ENCODE measurements at regions of chr9 and their contacts with region 1.

Region 1: DNA sequence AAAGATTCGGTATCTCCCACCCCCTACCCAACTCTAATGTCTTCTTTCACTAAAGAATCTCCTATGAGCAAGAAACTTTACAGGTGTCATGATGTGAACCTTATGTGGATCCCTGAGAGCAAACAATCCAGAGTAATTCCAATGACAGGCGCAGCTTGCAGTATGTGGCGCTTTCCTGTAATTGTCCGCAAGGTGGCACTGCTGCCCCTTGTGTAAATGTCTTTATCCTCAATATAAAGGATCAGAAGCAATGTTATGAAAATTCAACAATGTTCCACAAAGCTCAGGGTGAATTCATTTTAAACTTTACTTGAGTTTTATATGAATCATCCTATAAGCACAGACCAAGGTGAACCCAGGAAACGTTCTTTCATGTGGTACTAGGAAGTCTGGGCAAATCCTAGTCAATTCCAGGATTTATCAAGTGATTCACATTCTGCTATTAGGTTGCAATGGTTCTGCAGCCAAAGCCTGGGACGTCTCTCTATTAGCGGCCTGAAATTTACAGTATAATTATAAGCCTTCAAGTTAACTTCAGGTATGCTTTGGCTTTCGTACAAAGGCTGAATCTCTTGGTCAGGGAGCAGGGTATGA is 113.7 kb downstream of the TRPM6 start:
- DNase-seq: peak; percentile 23
- ATAC-seq: peak; percentile 72
- H3K4me3 ChIP-seq: no peak overlapping the region
- H3K27ac ChIP-seq: no peak overlapping the region
- H3K4me1 ChIP-seq: peaks cover 5% of the 10 kb centered on the region
- H3K27me3 ChIP-seq: no peaks in the 10 kb centered on the region; a peak in 1 of 4 replicates
- CTCF ChIP-seq: peak; percentile 81 to 89 (median 87); a peak in 5 of 6 replicates
- EP300 ChIP-seq: no peak
- POLR2A ChIP-seq: no peak
- RAD21 ChIP-seq: peak; percentile 82

Region 2: GRCh38 chr9:74952281-74953151 is 178.5 kb after region 1 on chr9 and contains the start of gene C9orf40:
- CTCF ChIA-PET with region 1: interaction called, 16 read pairs
- POLR2A ChIA-PET with region 1: no interaction called
- RAD21 ChIA-PET with region 1: interaction called, 3 read pairs
- SMC1A ChIA-PET with region 1: interaction called, 5 read pairs
- in situ Hi-C with region 1: no loop called
- intact Hi-C with region 1: loop called (anchors 2 kb)
- DNase-seq: peak; percentile 38
- ATAC-seq: peak; percentile 95
- H3K4me3 ChIP-seq: peak within 1 kb of the TSS; percentile 95
- H3K27ac ChIP-seq: peak within 1 kb of the TSS; percentile 91
- H3K4me1 ChIP-seq: peaks cover 3% of the 10 kb centered on the region; the same call in 1 of the 2 replicates
- H3K27me3 ChIP-seq: no peaks in the 10 kb centered on the region
- CTCF ChIP-seq: peak; percentile 72 to 89 (median 88)
- EP300 ChIP-seq: no peak
- POLR2A ChIP-seq: peak; percentile 87
- RAD21 ChIP-seq: peak; percentile 37; the same call in 1 of the 2 replicates
- polyA plus RNA-seq, gene C9orf40: 7.8 to 14.1 TPM

Region 3: DNA sequence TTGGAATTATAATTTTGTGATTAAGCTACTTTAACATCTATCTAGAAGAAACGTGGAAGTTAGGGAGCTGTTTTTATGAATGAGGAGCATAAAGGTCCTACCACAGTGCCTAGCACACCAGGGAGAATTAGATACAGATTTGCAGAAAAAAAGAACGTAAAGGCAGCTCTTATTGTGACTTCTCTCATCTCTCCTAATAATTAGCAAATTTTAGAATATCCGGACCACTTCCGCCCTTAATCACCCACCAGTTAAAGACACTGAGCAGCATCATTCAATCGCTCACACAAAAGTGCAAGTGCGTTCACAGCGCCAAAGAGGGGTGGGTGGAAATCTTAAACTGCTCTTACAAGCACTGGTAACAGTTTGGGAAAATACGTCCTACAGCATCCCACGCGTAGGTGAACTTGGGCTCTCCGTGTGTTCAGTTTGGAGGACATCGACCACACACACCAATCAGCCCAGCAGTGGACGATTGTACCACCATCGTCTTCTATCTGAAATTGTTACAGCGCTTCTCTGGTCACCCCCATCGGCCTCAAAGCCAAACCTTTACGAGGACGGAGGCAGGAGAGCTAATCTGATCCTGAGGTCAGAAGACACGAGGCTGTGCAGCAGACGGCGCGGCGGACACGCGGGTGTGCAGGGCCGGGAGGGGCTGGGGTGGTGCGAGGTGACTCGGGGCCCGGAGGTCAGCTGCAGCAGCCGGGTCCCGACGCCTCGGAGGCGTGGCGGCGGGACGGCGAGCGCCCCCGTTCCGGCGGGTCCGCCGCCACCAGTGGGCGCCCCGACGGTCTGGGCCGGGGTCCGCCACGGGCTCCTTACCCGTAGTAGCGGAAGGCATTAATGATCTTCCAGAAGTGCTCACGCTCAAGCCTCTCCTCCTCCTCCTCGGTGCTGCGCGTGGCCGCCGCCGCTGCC is 253.5 kb after region 1 on chr9:
- CTCF ChIA-PET with region 1: interaction called, 55 read pairs
- POLR2A ChIA-PET with region 1: no interaction called
- RAD21 ChIA-PET with region 1: interaction called, 11 read pairs
- SMC1A ChIA-PET with region 1: interaction called, 10 read pairs
- in situ Hi-C with region 1: no loop called
- intact Hi-C with region 1: no loop called
- DNase-seq: no peak
- ATAC-seq: peak; percentile 74
- H3K4me3 ChIP-seq: peak overlapping the region; percentile 76
- H3K27ac ChIP-seq: peak overlapping the region; percentile 81
- H3K4me1 ChIP-seq: no peaks in the 10 kb centered on the region; the same call in 1 of the 2 replicates
- H3K27me3 ChIP-seq: no peaks in the 10 kb centered on the region
- CTCF ChIP-seq: peak in 2 of 3 experiments; percentile 3 to 37; a peak in 2 of 6 replicates
- EP300 ChIP-seq: no peak
- POLR2A ChIP-seq: no peak
- RAD21 ChIP-seq: no peak

Region 4: GRCh38 chr9:75083188-75083970 is 309.4 kb after region 1 on chr9:
- CTCF ChIA-PET with region 1: interaction called, 113 read pairs
- POLR2A ChIA-PET with region 1: no interaction called
- RAD21 ChIA-PET with region 1: interaction called, 6 read pairs
- SMC1A ChIA-PET with region 1: interaction called, 11 read pairs
- in situ Hi-C with region 1: loop called (anchors 5 kb)
- intact Hi-C with region 1: no loop called
- DNase-seq: no peak
- ATAC-seq: no peak
- H3K4me3 ChIP-seq: no peak overlapping the region
- H3K27ac ChIP-seq: no peak overlapping the region
- H3K4me1 ChIP-seq: peaks cover 10% of the 10 kb centered on the region; the same call in 1 of the 2 replicates
- H3K27me3 ChIP-seq: no peaks in the 10 kb centered on the region
- CTCF ChIP-seq: no peak
- EP300 ChIP-seq: no peak
- POLR2A ChIP-seq: no peak
- RAD21 ChIP-seq: no peak

Region 5: DNA sequence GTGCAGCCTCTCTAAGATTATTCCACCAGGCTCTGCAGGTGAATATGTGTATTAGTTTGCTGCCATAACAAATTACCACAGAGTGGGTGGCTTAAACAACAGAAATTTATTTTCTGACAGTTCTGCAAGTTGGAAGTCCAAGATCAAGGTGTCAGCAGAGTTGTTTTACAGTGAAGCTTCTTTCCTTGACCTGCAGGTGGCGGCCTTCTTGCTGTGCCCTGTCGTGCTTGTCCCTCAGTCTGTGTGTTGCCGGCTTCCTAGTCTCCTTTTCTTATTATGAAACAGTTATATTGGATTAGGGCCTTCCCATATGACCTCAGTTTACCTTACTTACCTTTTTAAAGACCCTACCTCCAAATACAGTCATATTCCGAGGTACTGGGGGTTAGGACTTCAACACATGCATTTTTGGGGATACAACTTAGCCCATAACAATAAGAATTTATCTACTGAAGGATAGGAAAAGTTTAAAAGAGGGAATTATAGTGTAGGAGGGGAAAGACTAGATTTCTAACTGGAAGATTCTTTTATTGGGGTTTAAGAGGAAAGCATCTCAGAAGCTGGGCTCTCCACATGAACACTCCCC is 411.7 kb after region 1 on chr9:
- CTCF ChIA-PET with region 1: interaction called, 8 read pairs
- POLR2A ChIA-PET with region 1: no interaction called
- RAD21 ChIA-PET with region 1: no interaction called
- SMC1A ChIA-PET with region 1: no interaction called
- in situ Hi-C with region 1: no loop called
- intact Hi-C with region 1: loop called (anchors 2 kb)
- DNase-seq: no peak
- ATAC-seq: peak; percentile 94
- H3K4me3 ChIP-seq: no peak overlapping the region
- H3K27ac ChIP-seq: no peak overlapping the region
- H3K4me1 ChIP-seq: no peaks in the 10 kb centered on the region
- H3K27me3 ChIP-seq: no peaks in the 10 kb centered on the region; a peak in 1 of 4 replicates
- CTCF ChIP-seq: peak; percentile 57 to 90 (median 76)
- EP300 ChIP-seq: no peak
- POLR2A ChIP-seq: no peak
- RAD21 ChIP-seq: no peak

Measured in GM12878 (cell line).